ENCODE measurements at regions of chrX and their contacts with region 1.

Region 1: DNA sequence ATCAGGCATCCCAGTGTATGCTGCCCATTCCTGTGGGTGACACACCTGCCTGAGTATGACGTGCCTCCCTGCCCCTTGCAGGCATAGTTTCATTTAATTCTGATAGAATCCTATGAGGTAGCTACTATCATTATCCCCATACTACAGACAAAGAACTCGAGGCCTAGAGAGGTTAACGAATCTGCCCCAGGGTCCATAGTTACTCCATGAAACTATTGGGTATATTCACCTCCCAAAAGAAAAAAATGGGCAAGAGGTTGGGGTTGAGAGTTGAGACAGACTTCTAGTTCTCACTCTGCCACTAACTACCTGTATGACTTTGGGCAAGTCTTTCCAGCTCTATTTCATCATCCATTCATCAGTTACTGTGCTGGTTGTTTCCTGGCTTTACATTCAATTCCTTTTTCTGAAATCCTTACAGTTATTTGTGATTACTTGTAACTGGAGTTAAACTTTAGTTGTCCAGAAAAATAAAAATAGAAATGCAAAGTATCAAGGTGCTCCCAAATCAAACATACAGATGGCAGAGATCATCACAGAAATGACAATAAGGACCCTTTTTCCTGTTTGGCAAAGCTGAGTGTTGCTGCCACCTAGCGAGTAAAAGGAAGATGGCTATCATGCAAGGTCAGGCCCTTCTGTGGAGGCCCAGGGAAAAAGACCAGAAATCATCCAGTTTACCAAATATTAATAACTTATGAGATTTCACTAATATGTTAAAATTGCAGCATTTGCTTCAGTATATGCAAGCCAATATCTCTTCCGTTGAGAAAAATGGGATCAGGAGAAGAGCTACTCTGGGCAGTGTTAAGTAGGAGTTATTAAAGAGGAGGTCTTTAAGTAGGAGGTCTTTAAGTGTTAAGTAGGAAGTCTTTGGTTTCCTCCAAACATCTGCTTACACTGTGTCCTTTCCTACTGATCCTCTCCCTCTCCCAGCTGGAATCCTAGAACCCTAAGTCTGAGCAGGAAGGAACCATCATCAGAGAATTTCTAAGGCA is 17.1 kb upstream of the MAP7D3 start:
- DNase-seq: peak in 4 of 10 donors; percentile 12 to 40 (median 28)

Region 2: DNA sequence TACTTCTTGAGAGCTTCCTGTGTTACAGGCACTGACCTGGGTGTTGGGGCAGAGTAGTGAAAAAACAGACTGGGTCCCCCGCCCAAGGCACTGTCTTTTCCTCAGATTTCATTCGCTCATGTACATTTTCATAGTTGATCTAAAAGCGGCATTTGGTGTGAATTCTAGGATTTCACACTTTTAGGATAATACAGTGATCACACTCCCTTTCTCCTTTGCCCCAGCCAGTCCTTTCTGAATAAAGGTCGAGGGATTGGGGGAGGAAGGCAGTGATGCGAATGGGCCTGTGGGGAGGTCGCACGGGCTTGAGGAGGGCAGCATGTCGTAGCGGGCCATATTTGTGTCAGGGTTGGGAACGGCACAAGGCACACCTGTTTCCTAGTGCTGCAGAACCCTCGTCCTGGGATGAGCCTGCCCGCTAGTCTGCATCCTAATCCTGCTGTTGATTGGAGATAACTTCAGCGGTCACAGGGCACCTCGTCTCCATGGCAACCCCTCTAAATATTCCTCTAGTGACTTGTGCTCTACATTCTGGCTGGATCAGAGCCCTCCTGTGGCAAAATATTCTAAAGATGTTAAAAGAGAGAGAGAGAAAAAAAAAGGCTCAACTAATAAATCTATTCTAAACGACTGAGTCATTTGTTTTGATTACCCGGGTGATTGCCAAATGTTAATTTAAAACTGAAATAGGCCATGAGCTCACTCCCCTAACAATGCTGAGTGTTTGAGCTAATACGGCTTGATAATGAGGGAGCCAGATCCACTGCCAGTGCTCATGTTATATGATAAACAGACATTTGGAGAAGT is 99.2 kb before region 1 on chrX:
- intact Hi-C with region 1: loop called (anchors 5 kb)
- DNase-seq: peak in 3 of 10 donors; percentile 17 to 80 (median 25)

Region 3: DNA sequence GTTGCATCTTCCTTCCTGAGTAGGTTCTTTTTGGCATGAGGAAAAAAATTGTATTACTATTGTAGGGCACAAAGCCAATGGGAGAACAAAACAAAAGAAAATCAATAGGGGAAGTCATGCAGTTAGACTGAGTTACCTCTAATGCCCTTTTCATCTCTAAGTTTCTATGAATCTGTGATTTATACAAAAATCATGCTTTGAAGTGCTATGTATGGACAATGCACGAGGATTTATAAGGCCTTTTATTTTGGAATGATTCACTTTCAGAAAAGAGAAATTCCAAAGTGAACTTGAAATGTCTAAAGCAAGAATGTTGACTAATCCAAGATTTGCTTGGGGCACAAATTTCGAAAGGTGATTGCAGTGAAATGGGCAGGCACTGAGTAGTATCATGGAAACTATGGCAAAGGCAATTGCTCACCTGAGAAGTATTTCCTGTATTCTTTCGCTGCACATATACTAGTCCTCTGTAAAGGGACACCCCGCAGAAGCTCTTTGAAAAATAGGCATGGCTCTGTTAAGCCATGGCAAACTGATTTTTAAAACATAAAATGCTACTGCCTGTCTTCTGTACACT is 85.3 kb after region 1 on chrX:
- intact Hi-C with region 1: no loop called
- DNase-seq: no peak

Measured in posterior cingulate gyrus (tissue), 11 donors.